ENCODE measurements at regions of chr4 and their contacts with region 1.

Region 1: DNA sequence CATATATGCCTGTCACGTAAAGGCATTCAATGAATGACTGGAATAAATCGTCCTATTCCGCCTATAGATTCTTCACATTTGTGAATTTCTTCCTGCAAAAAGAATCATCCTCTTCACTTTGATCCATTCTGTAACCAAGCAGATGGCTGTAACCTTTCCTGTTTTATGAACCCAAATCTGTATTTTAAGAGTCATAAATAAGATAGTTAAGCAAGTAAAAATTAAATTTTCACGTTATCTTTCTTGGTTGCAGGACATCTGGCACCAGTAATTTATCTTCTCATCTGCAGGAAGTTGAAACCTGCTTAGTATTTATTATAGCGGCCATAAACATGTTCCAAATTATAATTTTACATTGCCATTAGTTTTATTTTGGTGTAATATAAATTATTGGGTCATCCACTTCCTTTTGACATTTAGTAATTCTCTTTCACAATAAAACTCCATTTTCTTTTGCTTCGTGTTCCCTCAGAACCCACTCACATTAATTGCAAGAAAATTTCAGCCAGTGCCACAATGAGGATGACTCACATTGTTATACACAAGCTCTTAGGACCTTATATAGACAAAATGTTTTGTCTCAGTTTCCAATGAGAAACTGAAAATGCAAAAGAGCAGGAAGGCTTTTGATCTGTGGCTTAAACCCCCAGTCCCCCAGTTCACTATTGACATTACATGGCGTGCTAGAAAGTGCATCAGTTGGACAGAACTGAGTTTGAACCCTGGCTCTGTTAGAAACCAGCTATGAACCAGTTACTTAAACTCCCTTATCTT is 51.1 kb downstream of the TMEM156 start:
- DNase-seq: peak in 2 of 3 donors; percentile 22 to 26
- H3K4me3 ChIP-seq: no peak overlapping the region
- H3K4me3 Mint-ChIP-seq: no peak overlapping the region
- H3K27ac ChIP-seq: no peak overlapping the region
- H3K27ac Mint-ChIP-seq: no peak overlapping the region
- H3K4me1 ChIP-seq: peaks cover 11 to 12% of the 10 kb centered on the region in 2 donors
- H3K4me1 Mint-ChIP-seq: peaks cover 17% of the 10 kb centered on the region
- H3K27me3 ChIP-seq: no peaks in the 10 kb centered on the region
- H3K27me3 Mint-ChIP-seq: no peaks in the 10 kb centered on the region
- CTCF ChIP-seq: no peak

Region 2: DNA sequence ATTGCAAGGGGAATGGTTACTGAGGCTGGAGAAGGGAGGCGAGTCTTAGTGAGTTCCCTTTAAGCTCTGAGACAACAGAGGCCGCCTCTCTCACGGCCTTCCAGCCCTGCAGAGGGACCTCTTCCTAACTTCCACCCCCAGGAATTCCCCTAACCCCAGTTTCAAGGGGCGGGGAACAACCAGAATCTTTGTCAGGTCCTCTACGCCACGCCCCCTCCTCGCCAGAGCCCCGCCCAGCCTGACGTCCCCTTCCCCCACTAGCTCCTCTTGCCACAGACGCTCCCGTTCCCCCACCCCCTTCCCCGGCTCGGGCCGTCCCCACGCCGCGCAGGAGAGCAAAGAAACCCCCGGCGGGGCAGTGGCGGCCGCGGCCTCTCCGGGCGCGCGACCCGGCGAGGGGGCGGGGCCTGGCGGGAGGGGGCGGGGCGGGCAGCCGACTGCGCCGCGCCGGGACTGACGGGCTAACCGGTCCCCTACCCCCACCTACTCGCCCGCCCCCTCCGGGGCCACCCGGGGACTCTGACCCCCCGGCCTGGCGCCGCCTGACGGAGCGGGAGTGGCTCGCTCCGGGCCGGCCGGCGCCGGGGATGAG is 63.4 kb after region 1 on chr4:
- intact Hi-C with region 1: loop called in 1 of 2 experiments (anchors 10 kb)
- DNase-seq: peak; percentile 97 to 99 (median 98)
- H3K4me3 ChIP-seq: peak overlapping the region; percentile 54 to 98 (median 87)
- H3K4me3 Mint-ChIP-seq: peak overlapping the region; percentile 79 to 84
- H3K27ac ChIP-seq: peak overlapping the region; percentile 47 to 81
- H3K27ac Mint-ChIP-seq: peak overlapping the region; percentile 87 to 95 (median 90)
- H3K4me1 ChIP-seq: peaks cover 38 to 47% of the 10 kb centered on the region in 2 donors
- H3K4me1 Mint-ChIP-seq: peaks cover 48% of the 10 kb centered on the region
- H3K27me3 ChIP-seq: no peaks in the 10 kb centered on the region
- H3K27me3 Mint-ChIP-seq: no peaks in the 10 kb centered on the region
- CTCF ChIP-seq: no peak